CD4-positive, alpha-beta T cell (primary cell): ENCODE measurements at regions of chr20 and their contacts with region 1.

Region 1: DNA sequence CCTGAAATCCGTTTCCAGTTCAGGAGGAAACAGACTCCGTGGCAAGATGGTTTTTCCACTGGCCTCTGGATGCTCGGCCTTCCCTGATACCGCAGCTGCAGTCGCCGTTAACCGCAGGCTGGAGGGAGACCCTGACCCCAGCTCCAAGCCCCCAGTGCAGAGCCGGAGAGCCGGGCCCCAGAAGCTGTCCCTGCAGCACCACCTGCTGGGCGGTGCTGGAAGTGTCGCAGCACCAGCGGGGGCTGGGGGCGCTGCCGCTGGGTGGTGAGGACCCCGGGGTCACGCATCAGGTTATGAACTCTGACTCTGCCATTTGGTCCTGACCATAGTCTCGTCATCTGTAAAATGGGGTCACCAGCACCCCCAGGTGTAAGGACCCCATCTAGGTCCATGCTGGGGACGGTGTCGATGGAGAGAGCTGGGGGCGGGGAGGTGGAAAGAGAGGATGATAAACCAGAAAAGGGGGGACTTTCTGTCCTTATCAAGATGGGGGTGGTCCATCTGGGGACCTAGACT is 20.7 kb upstream of the CHRNA4 start:
- DNase-seq: peak in 12 of 14 experiments; percentile 1 to 60 (median 25)
- ATAC-seq: no peak
- H3K4me3 ChIP-seq: no peak overlapping the region
- H3K4me3 Mint-ChIP-seq: no peak overlapping the region
- H3K27ac ChIP-seq: no peak overlapping the region
- H3K27ac Mint-ChIP-seq: no peak overlapping the region
- H3K4me1 ChIP-seq: peaks cover 3% of the 10 kb centered on the region
- H3K4me1 Mint-ChIP-seq: no peaks in the 10 kb centered on the region
- H3K27me3 ChIP-seq: peaks cover 14 to 31% of the 10 kb centered on the region in 2 experiments
- H3K27me3 Mint-ChIP-seq: peaks cover 26% of the 10 kb centered on the region
- CTCF ChIP-seq: peak; percentile 86

Region 2: GRCh38 chr20:63056236-63056948 is 325.5 kb before region 1 on chr20:
- CTCF ChIA-PET with region 1: no interaction called
- POLR2A ChIA-PET with region 1: no interaction called
- intact Hi-C with region 1: loop called in 1 of 2 experiments (anchors 2 kb)
- DNase-seq: peak in 11 of 14 experiments; percentile 17 to 67 (median 33)
- ATAC-seq: peak; percentile 72
- H3K4me3 ChIP-seq: no peak overlapping the region
- H3K4me3 Mint-ChIP-seq: no peak overlapping the region
- H3K27ac ChIP-seq: no peak overlapping the region
- H3K27ac Mint-ChIP-seq: no peak overlapping the region
- H3K4me1 ChIP-seq: peaks cover 8% of the 10 kb centered on the region
- H3K4me1 Mint-ChIP-seq: no peaks in the 10 kb centered on the region
- H3K27me3 ChIP-seq: peaks cover 10 to 16% of the 10 kb centered on the region in 2 experiments
- H3K27me3 Mint-ChIP-seq: peaks cover 16% of the 10 kb centered on the region
- CTCF ChIP-seq: peak; percentile 83

Region 3: GRCh38 chr20:63089051-63089891 is 292.6 kb before region 1 on chr20:
- CTCF ChIA-PET with region 1: no interaction called
- POLR2A ChIA-PET with region 1: no interaction called
- intact Hi-C with region 1: no loop called
- DNase-seq: peak in 1 of 14 experiments; percentile 12
- ATAC-seq: no peak
- H3K4me3 ChIP-seq: no peak overlapping the region
- H3K4me3 Mint-ChIP-seq: no peak overlapping the region
- H3K27ac ChIP-seq: no peak overlapping the region
- H3K27ac Mint-ChIP-seq: no peak overlapping the region
- H3K4me1 ChIP-seq: no peaks in the 10 kb centered on the region
- H3K4me1 Mint-ChIP-seq: no peaks in the 10 kb centered on the region
- H3K27me3 ChIP-seq: peaks cover 16 to 30% of the 10 kb centered on the region in 2 experiments
- H3K27me3 Mint-ChIP-seq: peaks cover 48% of the 10 kb centered on the region
- CTCF ChIP-seq: no peak

Region 4: GRCh38 chr20:63223221-63224207 is 158.4 kb before region 1 on chr20:
- CTCF ChIA-PET with region 1: interaction called, 16 read pairs
- POLR2A ChIA-PET with region 1: no interaction called
- intact Hi-C with region 1: loop called in 1 of 2 experiments (anchors 1 kb)
- DNase-seq: peak; percentile 20 to 71 (median 34)
- ATAC-seq: peak; percentile 62
- H3K4me3 ChIP-seq: no peak overlapping the region
- H3K4me3 Mint-ChIP-seq: peak overlapping the region; percentile 48
- H3K27ac ChIP-seq: no peak overlapping the region
- H3K27ac Mint-ChIP-seq: no peak overlapping the region
- H3K4me1 ChIP-seq: peaks cover 5% of the 10 kb centered on the region
- H3K4me1 Mint-ChIP-seq: no peaks in the 10 kb centered on the region
- H3K27me3 ChIP-seq: peaks cover 0 to under 1% of the 10 kb centered on the region in 2 experiments
- H3K27me3 Mint-ChIP-seq: no peaks in the 10 kb centered on the region
- CTCF ChIP-seq: peak; percentile 90

Region 5: GRCh38 chr20:63309261-63310071 is 72.4 kb before region 1 on chr20:
- CTCF ChIA-PET with region 1: interaction called, 4 read pairs
- POLR2A ChIA-PET with region 1: no interaction called
- intact Hi-C with region 1: loop called (anchors 5 to 10 kb)
- DNase-seq: peak in 7 of 14 experiments; percentile 12 to 58 (median 20)
- ATAC-seq: peak; percentile 17
- H3K4me3 ChIP-seq: no peak overlapping the region
- H3K4me3 Mint-ChIP-seq: no peak overlapping the region
- H3K27ac ChIP-seq: no peak overlapping the region
- H3K27ac Mint-ChIP-seq: no peak overlapping the region
- H3K4me1 ChIP-seq: no peaks in the 10 kb centered on the region
- H3K4me1 Mint-ChIP-seq: no peaks in the 10 kb centered on the region
- H3K27me3 ChIP-seq: peaks cover 0 to 24% of the 10 kb centered on the region in 2 experiments
- H3K27me3 Mint-ChIP-seq: peaks cover 4% of the 10 kb centered on the region
- CTCF ChIP-seq: peak; percentile 56